HepG2 (cell line): ENCODE measurements at regions of chr17 and their contacts with region 1.

Region 1: GRCh38 chr17:75393523-75394331 is 11.8 kb downstream of the GRB2 start:
- DNase-seq: peak; percentile 97
- ATAC-seq: peak; percentile 99
- H3K4me3 ChIP-seq: peak overlapping the region; percentile 69 to 94 (median 91)
- H3K27ac ChIP-seq: peak overlapping the region; percentile 72
- H3K4me1 ChIP-seq: peaks cover 69% of the 10 kb centered on the region
- H3K27me3 ChIP-seq: peaks cover 0 to 3% of the 10 kb centered on the region in 2 experiments; a peak in 1 of 5 replicates
- CTCF ChIP-seq: peak; percentile 44
- EP300 ChIP-seq: peak in 1 of 2 experiments; percentile 62; a peak in 3 of 4 replicates
- POLR2A ChIP-seq: peak; percentile 84 to 90
- RAD21 ChIP-seq: 0 out of 2 replicates have a peak, but pooled peaks have one; percentile 28

Region 2: DNA sequence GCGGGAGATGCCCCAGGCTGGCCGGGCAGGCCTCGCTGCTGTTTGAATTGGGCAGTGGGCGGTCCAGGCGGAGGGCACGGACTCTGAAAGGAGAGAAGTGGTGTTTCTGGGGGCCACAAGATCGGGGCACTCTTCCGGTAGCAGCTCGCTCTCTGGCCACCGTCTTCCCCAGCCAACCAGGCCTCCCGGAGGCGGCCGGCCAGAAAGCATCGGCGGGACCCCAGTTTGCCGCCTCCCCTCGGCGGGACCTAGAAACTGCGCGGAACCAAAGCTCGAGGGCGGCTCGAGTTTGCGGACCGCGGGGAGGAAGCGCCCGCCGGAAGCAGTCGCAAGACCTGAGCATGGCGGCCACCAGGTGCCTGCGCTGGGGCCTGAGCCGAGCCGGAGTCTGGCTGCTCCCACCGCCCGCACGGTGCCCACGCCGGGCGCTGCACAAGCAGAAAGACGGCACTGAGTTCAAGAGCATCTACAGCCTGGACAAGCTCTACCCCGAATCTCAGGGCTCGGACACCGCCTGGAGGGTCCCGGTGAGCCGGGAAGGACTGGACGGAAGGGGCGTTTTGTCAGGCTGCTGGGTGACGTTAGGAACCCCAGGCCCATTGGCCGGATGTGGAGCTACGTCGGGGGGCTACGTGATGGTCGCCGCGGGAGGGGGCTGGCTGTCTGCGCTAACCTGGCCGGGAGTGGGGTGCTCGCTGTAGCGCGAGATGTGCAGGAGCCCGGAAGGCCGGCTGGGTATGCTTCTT is 381.2 kb before region 1 on chr17 and contains the start of gene MRPL58:
- CTCF ChIA-PET with region 1: no interaction called
- POLR2A ChIA-PET with region 1: interaction called, 10 read pairs
- in situ Hi-C with region 1: no loop called
- intact Hi-C with region 1: no loop called
- DNase-seq: peak; percentile 88
- ATAC-seq: peak; percentile 91
- H3K4me3 ChIP-seq: peak within 1 kb of the TSS; percentile 71 to 96 (median 85)
- H3K27ac ChIP-seq: peak within 1 kb of the TSS; percentile 85
- H3K4me1 ChIP-seq: peaks cover 28% of the 10 kb centered on the region
- H3K27me3 ChIP-seq: no peaks in the 10 kb centered on the region; a peak in 2 of 5 replicates
- CTCF ChIP-seq: peak; percentile 74
- EP300 ChIP-seq: peak; percentile 48 to 72; a peak in 3 of 4 replicates
- POLR2A ChIP-seq: peak; percentile 81 to 89; a peak in 3 of 4 replicates
- RAD21 ChIP-seq: peak; percentile 80
- total RNA-seq, gene MRPL58: 68.9 and 101 TPM in 2 replicates

Region 3: DNA sequence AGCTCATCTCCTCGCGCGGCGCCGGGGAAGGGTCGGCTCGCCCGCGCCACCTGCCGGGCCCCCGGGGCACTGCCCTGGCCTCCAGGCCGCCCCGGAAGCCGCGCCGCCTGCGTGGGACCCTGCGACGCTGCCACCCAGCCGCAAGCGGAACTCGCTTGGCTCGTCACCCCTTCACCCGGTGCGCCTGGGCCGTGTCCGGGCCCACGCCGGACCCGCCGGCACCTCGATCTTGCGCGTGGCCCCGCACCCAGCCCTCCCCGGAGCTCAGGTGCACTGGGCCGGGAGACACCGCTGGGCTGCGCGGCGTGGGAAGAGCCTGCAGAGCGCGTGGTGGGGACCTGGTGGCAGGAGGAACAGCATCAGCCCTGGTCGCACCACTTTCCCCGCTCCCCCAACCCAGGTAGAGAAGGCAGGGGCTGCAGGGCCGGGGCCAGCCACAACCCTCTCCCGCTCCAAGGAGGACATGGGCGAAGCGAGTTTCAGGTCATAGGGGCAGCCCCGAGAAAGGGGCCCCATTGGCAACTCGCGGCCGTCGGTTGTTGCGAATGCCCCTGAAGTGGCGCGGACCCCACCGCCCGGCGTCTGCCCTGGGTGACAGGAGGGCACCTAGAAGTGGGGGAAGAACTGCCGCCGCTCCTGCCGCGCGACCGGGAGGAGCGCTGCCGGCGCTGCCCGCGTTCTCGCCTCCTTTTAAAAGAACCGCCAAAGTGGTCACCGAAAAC is 122.3 kb before region 1 on chr17:
- CTCF ChIA-PET with region 1: no interaction called
- POLR2A ChIA-PET with region 1: interaction called, 43 read pairs
- in situ Hi-C with region 1: no loop called
- intact Hi-C with region 1: no loop called
- DNase-seq: peak; percentile 58
- ATAC-seq: peak; percentile 36
- H3K4me3 ChIP-seq: peak overlapping the region; percentile 91 to 98 (median 94)
- H3K27ac ChIP-seq: peak overlapping the region; percentile 77
- H3K4me1 ChIP-seq: peaks cover 43% of the 10 kb centered on the region
- H3K27me3 ChIP-seq: no peaks in the 10 kb centered on the region
- CTCF ChIP-seq: peak; percentile 70
- EP300 ChIP-seq: no peak
- POLR2A ChIP-seq: peak in 1 of 2 experiments; percentile 71; a peak in 2 of 4 replicates
- RAD21 ChIP-seq: peak; percentile 87

Region 4: GRCh38 chr17:75309025-75309772 is 84.5 kb before region 1 on chr17:
- CTCF ChIA-PET with region 1: no interaction called
- POLR2A ChIA-PET with region 1: interaction called, 16 read pairs
- in situ Hi-C with region 1: no loop called
- intact Hi-C with region 1: no loop called
- DNase-seq: peak; percentile 94
- ATAC-seq: peak; percentile 87
- H3K4me3 ChIP-seq: peak overlapping the region; percentile 35 to 69 (median 48); a peak in 5 of 6 replicates
- H3K27ac ChIP-seq: peak overlapping the region; percentile 89
- H3K4me1 ChIP-seq: peaks cover 66% of the 10 kb centered on the region
- H3K27me3 ChIP-seq: no peaks in the 10 kb centered on the region
- CTCF ChIP-seq: no peak; the same call in 1 of the 2 replicates
- EP300 ChIP-seq: peak; percentile 53 to 67; a peak in 2 of 4 replicates
- POLR2A ChIP-seq: peak; percentile 93
- RAD21 ChIP-seq: peak; percentile 70

Region 5: GRCh38 chr17:75325827-75326225 is 67.9 kb before region 1 on chr17:
- CTCF ChIA-PET with region 1: no interaction called
- POLR2A ChIA-PET with region 1: interaction called, 6 read pairs
- in situ Hi-C with region 1: loop called (anchors 5 kb)
- intact Hi-C with region 1: no loop called
- DNase-seq: no peak
- ATAC-seq: no peak
- H3K4me3 ChIP-seq: no peak overlapping the region
- H3K27ac ChIP-seq: peak overlapping the region; percentile 71
- H3K4me1 ChIP-seq: peaks cover 13% of the 10 kb centered on the region
- H3K27me3 ChIP-seq: no peaks in the 10 kb centered on the region
- CTCF ChIP-seq: no peak
- EP300 ChIP-seq: no peak
- POLR2A ChIP-seq: no peak
- RAD21 ChIP-seq: no peak

Region 6: DNA sequence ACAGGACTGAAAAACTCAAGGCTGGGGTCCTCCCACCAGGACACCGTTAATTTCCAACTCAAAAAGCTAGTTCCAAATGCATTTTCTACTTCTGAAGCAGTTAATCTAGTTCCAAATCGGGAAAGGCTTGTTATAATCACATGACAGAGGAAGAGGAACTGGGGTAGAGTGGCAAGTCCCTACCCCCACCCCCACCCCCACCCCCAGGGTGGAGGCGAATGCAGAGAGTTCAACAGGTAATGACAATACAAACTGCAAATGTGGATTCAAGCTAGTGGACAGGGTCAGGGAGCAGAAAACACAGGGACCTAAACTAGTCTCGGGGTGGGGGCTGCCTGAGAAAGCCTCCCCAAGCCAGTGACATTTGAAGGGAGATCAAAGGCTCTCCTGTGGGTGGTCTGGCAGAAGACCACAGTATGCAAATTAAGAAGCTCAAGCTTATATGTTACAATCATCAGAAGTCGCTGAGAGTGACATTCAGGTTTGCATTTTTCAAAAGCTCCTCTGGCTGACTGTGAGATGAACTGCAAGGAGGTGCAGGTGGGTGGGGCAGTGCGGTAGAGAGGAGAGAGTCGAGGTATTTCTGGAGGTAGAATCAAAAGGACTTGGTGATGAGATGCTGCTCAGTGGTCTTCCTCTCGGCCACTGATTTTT is 48.1 kb before region 1 on chr17:
- CTCF ChIA-PET with region 1: no interaction called
- POLR2A ChIA-PET with region 1: interaction called, 11 read pairs
- in situ Hi-C with region 1: no loop called
- intact Hi-C with region 1: no loop called
- DNase-seq: no peak
- ATAC-seq: no peak
- H3K4me3 ChIP-seq: no peak overlapping the region
- H3K27ac ChIP-seq: no peak overlapping the region
- H3K4me1 ChIP-seq: peaks cover 74% of the 10 kb centered on the region
- H3K27me3 ChIP-seq: no peaks in the 10 kb centered on the region
- CTCF ChIP-seq: no peak
- EP300 ChIP-seq: no peak
- POLR2A ChIP-seq: no peak
- RAD21 ChIP-seq: no peak

Region 7: DNA sequence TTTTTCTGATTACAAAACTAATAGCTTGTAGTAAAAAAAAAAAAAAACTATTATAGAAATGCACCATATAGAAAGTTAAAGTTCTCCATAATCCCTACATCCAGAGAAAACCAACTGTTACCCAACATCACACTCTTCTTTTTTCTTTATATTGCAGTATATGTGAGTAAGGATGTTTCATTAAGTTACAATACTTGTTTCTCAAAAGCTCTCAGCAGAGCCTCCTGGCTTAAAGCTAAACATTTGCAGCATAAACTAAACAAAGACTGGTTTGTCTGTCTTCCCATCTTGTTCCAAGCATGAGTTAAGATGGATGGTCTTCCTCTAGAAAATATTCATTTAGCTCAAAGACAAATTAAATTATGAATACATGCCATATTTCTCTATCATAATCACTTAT is 13.4 kb before region 1 on chr17:
- CTCF ChIA-PET with region 1: no interaction called
- POLR2A ChIA-PET with region 1: interaction called, 67 read pairs
- in situ Hi-C with region 1: no loop called
- intact Hi-C with region 1: no loop called
- DNase-seq: no peak
- ATAC-seq: no peak
- H3K4me3 ChIP-seq: no peak overlapping the region
- H3K27ac ChIP-seq: no peak overlapping the region
- H3K4me1 ChIP-seq: peaks cover 58% of the 10 kb centered on the region
- H3K27me3 ChIP-seq: no peaks in the 10 kb centered on the region
- CTCF ChIP-seq: 0 out of 2 replicates have a peak, but pooled peaks have one; percentile 4
- EP300 ChIP-seq: no peak
- POLR2A ChIP-seq: no peak
- RAD21 ChIP-seq: no peak

Region 8: DNA sequence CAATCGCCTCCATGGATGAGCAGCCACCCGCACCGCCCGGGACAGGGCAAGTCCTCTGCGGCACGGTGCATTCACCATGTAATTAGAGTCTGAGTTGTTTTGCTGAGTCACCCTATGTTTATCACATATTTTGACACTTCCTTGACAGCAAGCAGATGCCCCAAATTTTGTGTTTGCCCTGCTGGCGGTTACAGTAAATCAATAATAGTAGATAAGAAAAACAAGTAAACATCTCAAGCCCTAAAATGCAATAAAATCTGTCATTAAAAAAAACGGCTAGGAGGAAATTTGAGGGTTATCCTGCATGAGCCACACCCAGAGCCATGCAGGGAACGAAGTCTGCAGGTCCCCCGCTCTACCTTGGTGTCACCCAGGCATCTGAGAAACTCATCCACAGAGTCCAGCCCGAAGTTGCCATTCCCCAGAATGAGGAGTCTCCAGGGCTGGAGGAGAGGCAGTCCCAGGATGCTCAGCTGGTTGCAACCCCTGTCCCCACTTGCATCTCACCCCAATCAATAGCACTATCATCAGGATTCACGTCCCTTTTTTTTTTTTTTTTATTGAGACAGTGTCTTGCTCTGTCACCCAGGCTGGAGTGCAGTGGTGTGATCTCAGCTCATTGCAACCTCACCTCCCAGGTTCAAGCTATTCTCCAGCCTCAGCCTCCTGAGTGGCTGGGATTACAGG is 1266.3 kb after region 1 on chr17:
- CTCF ChIA-PET with region 1: no interaction called
- POLR2A ChIA-PET with region 1: no interaction called
- in situ Hi-C with region 1: no loop called
- intact Hi-C with region 1: no loop called
- DNase-seq: no peak
- ATAC-seq: peak; percentile 76
- H3K4me3 ChIP-seq: peak overlapping the region in 2 of 3 experiments; percentile 5 to 16; a peak in 2 of 6 replicates
- H3K27ac ChIP-seq: no peak overlapping the region
- H3K4me1 ChIP-seq: peaks cover 61% of the 10 kb centered on the region
- H3K27me3 ChIP-seq: no peaks in the 10 kb centered on the region
- CTCF ChIP-seq: no peak
- EP300 ChIP-seq: no peak
- POLR2A ChIP-seq: no peak
- RAD21 ChIP-seq: no peak